A549 (cell line): ENCODE measurements at regions of chr12 and their contacts with region 1.

Region 1: DNA sequence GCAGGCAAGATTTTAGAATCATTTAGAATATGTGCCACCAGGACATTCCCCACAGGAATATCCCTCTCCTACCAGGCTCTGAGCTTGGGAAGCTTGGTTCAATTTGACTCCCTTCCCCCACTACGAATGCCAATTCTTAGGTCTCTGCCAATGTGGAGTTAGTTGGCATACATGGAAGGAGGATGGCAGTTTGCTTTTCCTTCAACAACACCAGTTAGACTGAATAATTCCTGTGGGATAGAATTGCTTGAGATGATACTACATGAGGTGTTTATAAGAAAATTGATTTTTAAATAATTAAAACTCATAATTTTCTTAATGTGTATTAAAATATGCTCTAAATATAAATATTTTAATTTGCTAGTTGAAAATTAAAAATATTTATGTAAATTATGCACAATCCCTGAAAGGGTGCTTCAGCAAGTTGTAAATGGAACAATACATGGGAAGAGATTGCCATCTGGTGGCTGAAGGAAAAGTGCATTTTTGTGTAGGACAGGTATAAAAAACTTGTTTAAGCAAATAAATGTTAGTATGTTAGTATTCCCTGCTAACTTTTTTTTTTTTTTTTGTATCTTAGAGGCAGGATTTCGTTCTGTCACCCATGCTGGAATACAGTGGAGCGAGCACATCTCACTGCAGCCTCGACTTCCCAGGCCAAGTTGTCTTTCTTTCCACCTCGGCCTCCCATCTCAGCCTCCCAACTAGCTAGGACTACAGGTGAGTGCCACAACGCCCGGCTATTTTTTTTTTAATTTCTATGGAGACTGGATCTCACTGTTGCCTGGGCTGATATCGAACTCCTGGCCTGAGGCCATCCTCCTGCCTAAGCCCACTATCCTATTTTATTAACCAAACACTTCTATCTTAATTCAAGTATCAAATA is 25.8 kb upstream of the STRAP start:
- DNase-seq: peak; percentile 31 to 78
- ATAC-seq: peak in 1 of 2 experiments; percentile 82; a peak in 3 of 6 replicates
- H3K4me3 ChIP-seq: no peak overlapping the region
- H3K27ac ChIP-seq: peak overlapping the region; percentile 40 to 70; a peak in 5 of 6 replicates
- H3K4me1 ChIP-seq: peaks cover 31% of the 10 kb centered on the region
- CTCF ChIP-seq: peak; percentile 98
- EP300 ChIP-seq: no peak
- POLR2A ChIP-seq: no peak
- RAD21 ChIP-seq: peak; percentile 99

Region 2: GRCh38 chr12:15532364-15532977 is 323.9 kb before region 1 on chr12:
- CTCF ChIA-PET with region 1: interaction called, 61 read pairs
- POLR2A ChIA-PET with region 1: no interaction called
- DNase-seq: peak; percentile 44 to 73
- ATAC-seq: peak; percentile 82 to 94
- H3K4me3 ChIP-seq: no peak overlapping the region
- H3K27ac ChIP-seq: no peak overlapping the region
- H3K4me1 ChIP-seq: peaks cover 3% of the 10 kb centered on the region; the same call in 1 of the 3 replicates
- CTCF ChIP-seq: peak; percentile 71
- EP300 ChIP-seq: no peak
- POLR2A ChIP-seq: no peak
- RAD21 ChIP-seq: peak; percentile 81 to 92

Region 3: GRCh38 chr12:15842108-15842507 is 14.2 kb before region 1 on chr12:
- CTCF ChIA-PET with region 1: interaction called, 19 read pairs
- POLR2A ChIA-PET with region 1: no interaction called
- DNase-seq: peak in 1 of 2 experiments; percentile 19
- ATAC-seq: no peak
- H3K4me3 ChIP-seq: no peak overlapping the region
- H3K27ac ChIP-seq: no peak overlapping the region
- H3K4me1 ChIP-seq: peaks cover 9% of the 10 kb centered on the region; the same call in 2 of the 3 replicates
- CTCF ChIP-seq: no peak
- EP300 ChIP-seq: no peak
- POLR2A ChIP-seq: no peak
- RAD21 ChIP-seq: no peak